ENCODE measurements at regions of chr11 and their contacts with region 1.

Region 1: GRCh38 chr11:1946812-1947484 is at the start of gene MRPL23:
- DNase-seq: no peak
- CTCF ChIP-seq: no peak

Region 2: GRCh38 chr11:1832211-1832919 is 114.6 kb before region 1 on chr11:
- CTCF ChIA-PET with region 1: interaction called, 12 read pairs
- POLR2A ChIA-PET with region 1: no interaction called
- DNase-seq: peak; percentile 87
- CTCF ChIP-seq: peak; percentile 83

Region 3: DNA sequence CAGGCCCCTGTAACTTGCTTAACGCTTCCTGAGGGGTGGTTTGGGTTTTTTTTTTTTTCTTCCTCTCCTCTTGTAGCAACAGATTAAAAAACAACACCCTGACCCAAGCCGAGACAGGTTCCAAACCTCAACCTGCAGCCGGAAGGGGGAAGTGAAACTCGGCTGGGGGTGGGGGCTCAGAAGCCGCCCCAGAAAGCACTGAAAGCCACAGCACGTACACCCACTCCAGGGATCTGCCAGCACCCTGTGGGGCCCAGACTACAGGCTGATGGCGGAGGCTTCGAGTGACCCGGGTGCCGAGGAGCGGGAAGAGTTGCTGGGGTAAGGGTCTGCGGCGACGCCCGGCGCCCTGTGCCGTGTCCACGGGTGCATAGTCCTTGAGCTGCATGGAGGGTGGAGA is 94.1 kb before region 1 on chr11 and contains the start of gene LSP1:
- CTCF ChIA-PET with region 1: interaction called, 11 read pairs
- POLR2A ChIA-PET with region 1: no interaction called
- DNase-seq: peak; percentile 93
- CTCF ChIP-seq: no peak

Region 4: DNA sequence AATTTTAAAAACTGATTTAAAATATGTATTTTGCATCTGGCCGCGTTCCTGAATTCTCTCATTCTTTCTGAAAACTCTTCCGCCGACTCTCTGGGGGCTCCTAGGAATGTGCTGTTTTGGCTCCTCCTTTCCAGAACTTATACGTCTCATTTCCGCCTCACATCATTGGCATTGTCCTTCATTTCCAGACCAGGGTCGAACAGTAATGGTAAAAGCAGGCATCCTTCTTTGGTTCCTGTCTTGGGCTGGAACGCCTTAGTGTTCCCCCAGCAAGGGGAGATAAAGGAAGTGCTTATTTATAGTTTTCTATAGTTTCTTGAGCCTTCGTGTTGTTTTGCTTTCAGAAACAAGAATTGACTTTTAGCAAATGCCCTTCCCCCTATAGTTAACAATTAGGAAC is 38.3 kb before region 1 on chr11:
- CTCF ChIA-PET with region 1: interaction called, 11 read pairs
- POLR2A ChIA-PET with region 1: no interaction called
- DNase-seq: no peak
- CTCF ChIP-seq: peak; percentile 4